ENCODE measurements at regions of chr14 and their contacts with region 1.

Region 1: GRCh38 chr14:31326111-31326510 is 94.2 kb downstream of the HEATR5A start:
- DNase-seq: peak in 7 of 9 donors; percentile 7 to 35 (median 16)
- ATAC-seq: no peak
- H3K4me3 ChIP-seq: no peak overlapping the region
- H3K4me3 Mint-ChIP-seq: no peak overlapping the region
- H3K27ac ChIP-seq: no peak overlapping the region
- H3K27ac Mint-ChIP-seq: no peak overlapping the region
- H3K4me1 ChIP-seq: no peaks in the 10 kb centered on the region
- H3K4me1 Mint-ChIP-seq: no peaks in the 10 kb centered on the region
- H3K27me3 ChIP-seq: no peaks in the 10 kb centered on the region
- H3K27me3 Mint-ChIP-seq: no peaks in the 10 kb centered on the region

Region 2: GRCh38 chr14:30980980-30981379 is 345.1 kb before region 1 on chr14:
- CTCF ChIA-PET with region 1: no interaction called
- POLR2A ChIA-PET with region 1: no interaction called
- intact Hi-C with region 1: loop called in 1 of 2 experiments (anchors 1 kb)
- DNase-seq: no peak
- ATAC-seq: no peak
- H3K4me3 ChIP-seq: no peak overlapping the region
- H3K4me3 Mint-ChIP-seq: no peak overlapping the region
- H3K27ac ChIP-seq: no peak overlapping the region
- H3K27ac Mint-ChIP-seq: peak overlapping the region in 7 of 9 donors; percentile 19 to 74 (median 50)
- H3K4me1 ChIP-seq: no peaks in the 10 kb centered on the region
- H3K4me1 Mint-ChIP-seq: peaks cover 7 to 40% (median 32%) of the 10 kb centered on the region in 7 donors
- H3K27me3 ChIP-seq: no peaks in the 10 kb centered on the region
- H3K27me3 Mint-ChIP-seq: no peaks in the 10 kb centered on the region

Region 3: DNA sequence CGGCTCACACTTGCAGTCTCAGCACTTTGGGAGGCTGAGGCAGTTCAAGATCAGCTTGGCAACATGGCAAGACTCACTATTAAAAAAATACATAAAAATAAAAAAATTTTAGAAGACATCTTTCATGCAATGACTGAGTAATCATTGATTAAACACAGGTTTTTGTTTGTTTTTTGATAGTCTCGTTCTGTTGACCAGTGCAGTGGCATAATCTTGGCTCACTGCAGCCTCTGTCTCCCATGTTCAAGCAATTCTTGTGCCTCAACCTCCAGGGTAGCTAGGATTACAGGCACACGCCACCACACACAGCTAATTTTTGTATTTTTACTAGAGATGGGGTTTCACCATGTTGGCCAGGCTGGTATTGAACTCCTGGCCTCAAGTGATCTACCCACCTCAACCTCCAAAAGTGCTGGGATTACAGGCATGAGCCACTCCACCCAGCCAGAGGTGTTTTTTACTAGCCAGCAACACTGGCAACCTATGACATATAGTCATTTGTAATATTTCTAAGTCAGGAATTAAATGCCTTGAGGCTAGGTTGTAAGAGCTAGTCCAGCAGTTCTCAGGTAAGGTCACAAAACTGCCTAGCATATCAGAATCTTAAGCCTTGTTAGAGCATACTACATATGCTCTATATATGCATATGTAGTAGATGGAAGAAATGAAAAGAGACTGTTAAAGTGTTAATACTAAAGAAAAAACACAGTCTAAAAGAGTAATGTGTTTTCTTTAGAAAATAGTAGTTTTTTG is 145.6 kb before region 1 on chr14:
- CTCF ChIA-PET with region 1: no interaction called
- POLR2A ChIA-PET with region 1: no interaction called
- intact Hi-C with region 1: loop called in 1 of 2 experiments (anchors 5 kb)
- DNase-seq: no peak
- ATAC-seq: no peak
- H3K4me3 ChIP-seq: no peak overlapping the region
- H3K4me3 Mint-ChIP-seq: no peak overlapping the region
- H3K27ac ChIP-seq: no peak overlapping the region
- H3K27ac Mint-ChIP-seq: peak overlapping the region in 5 of 9 donors; percentile 14 to 60 (median 36)
- H3K4me1 ChIP-seq: no peaks in the 10 kb centered on the region
- H3K4me1 Mint-ChIP-seq: peaks cover 0 to 24% (median 15%) of the 10 kb centered on the region in 7 donors
- H3K27me3 ChIP-seq: no peaks in the 10 kb centered on the region
- H3K27me3 Mint-ChIP-seq: no peaks in the 10 kb centered on the region